ENCODE measurements at regions of chr6 and their contacts with region 1.

Region 1: DNA sequence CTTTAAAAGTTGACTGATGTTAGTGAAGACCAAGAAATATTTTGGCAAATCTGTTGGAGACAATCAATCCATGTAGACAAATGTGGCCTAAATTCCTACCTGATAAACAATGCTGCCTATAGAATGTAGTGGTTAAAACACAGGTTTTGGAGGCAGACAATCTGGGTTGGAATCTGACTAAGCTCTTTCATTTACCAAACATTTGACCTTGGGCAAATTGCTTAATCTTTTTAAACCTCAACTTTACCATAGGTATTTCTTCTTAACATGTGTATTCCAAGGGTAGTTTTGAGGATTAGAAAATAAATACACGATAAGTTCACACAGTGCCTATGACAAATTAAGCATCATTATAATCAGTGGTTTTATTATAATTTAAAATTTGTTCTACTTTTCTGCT is 11.5 kb downstream of the RHAG start:
- DNase-seq: no peak
- ATAC-seq: no peak
- H3K4me3 ChIP-seq: no peak overlapping the region
- H3K27ac ChIP-seq: no peak overlapping the region
- H3K4me1 ChIP-seq: no peaks in the 10 kb centered on the region
- H3K27me3 ChIP-seq: no peaks in the 10 kb centered on the region
- CTCF ChIP-seq: no peak

Region 2: GRCh38 chr6:49646130-49646824 is 21.1 kb after region 1 on chr6:
- CTCF ChIA-PET with region 1: no interaction called
- POLR2A ChIA-PET with region 1: interaction called, 10 read pairs
- in situ Hi-C with region 1: no loop called
- intact Hi-C with region 1: no loop called
- DNase-seq: no peak
- ATAC-seq: no peak
- H3K4me3 ChIP-seq: no peak overlapping the region
- H3K27ac ChIP-seq: no peak overlapping the region
- H3K4me1 ChIP-seq: no peaks in the 10 kb centered on the region
- H3K27me3 ChIP-seq: no peaks in the 10 kb centered on the region
- CTCF ChIP-seq: no peak

Measured in Panc1 (cell line).